CD4-positive, alpha-beta T cell (primary cell): ENCODE measurements at regions of chr7 and their contacts with region 1.

Region 1: DNA sequence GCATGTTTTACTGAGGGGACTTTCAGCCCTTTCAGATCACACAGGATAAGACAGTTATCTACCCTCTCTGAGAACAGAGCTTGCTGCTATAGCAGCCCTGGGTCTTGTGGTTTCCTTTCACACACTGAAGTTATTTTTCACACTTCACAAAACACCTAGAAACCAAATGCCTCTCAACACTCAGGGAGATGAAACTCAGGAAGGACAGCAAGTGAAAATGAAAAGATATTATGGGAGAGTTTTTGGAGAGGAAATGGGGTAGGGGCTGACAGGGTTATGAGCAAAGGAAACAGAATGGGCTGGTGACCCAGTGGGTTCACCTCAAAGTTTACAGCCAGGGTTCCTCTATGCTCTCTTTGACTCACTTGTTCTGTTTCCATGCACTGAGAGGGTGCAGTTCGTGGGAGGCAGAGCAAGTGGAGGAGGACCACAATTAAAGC is 17.0 kb upstream of the GIMAP2 start:
- DNase-seq: peak in 13 of 14 experiments; percentile 34 to 92 (median 51)
- ATAC-seq: peak; percentile 82
- H3K4me3 ChIP-seq: peak overlapping the region; percentile 4
- H3K4me3 Mint-ChIP-seq: peak overlapping the region; percentile 49
- H3K27ac ChIP-seq: peak overlapping the region; percentile 73 to 85
- H3K27ac Mint-ChIP-seq: peak overlapping the region; percentile 91
- H3K4me1 ChIP-seq: peaks cover 70% of the 10 kb centered on the region
- H3K4me1 Mint-ChIP-seq: peaks cover 94% of the 10 kb centered on the region
- H3K27me3 ChIP-seq: no peaks in the 10 kb centered on the region
- H3K27me3 Mint-ChIP-seq: no peaks in the 10 kb centered on the region
- CTCF ChIP-seq: no peak

Region 2: GRCh38 chr7:150463461-150463860 is 205.0 kb before region 1 on chr7:
- CTCF ChIA-PET with region 1: no interaction called
- POLR2A ChIA-PET with region 1: no interaction called
- intact Hi-C with region 1: no loop called
- DNase-seq: peak in 2 of 14 experiments; percentile 32 to 41
- ATAC-seq: no peak
- H3K4me3 ChIP-seq: no peak overlapping the region
- H3K4me3 Mint-ChIP-seq: peak overlapping the region; percentile 38
- H3K27ac ChIP-seq: peak overlapping the region in 1 of 2 donors; percentile 10
- H3K27ac Mint-ChIP-seq: peak overlapping the region; percentile 81
- H3K4me1 ChIP-seq: peaks cover 55% of the 10 kb centered on the region
- H3K4me1 Mint-ChIP-seq: peaks cover 93% of the 10 kb centered on the region
- H3K27me3 ChIP-seq: no peaks in the 10 kb centered on the region
- H3K27me3 Mint-ChIP-seq: no peaks in the 10 kb centered on the region
- CTCF ChIP-seq: no peak

Region 3: GRCh38 chr7:150489782-150490181 is 178.7 kb before region 1 on chr7:
- CTCF ChIA-PET with region 1: no interaction called
- POLR2A ChIA-PET with region 1: no interaction called
- intact Hi-C with region 1: no loop called
- DNase-seq: peak in 1 of 14 experiments; percentile 36
- ATAC-seq: no peak
- H3K4me3 ChIP-seq: no peak overlapping the region
- H3K4me3 Mint-ChIP-seq: no peak overlapping the region
- H3K27ac ChIP-seq: no peak overlapping the region
- H3K27ac Mint-ChIP-seq: peak overlapping the region; percentile 32
- H3K4me1 ChIP-seq: peaks cover 18% of the 10 kb centered on the region
- H3K4me1 Mint-ChIP-seq: peaks cover 71% of the 10 kb centered on the region
- H3K27me3 ChIP-seq: no peaks in the 10 kb centered on the region
- H3K27me3 Mint-ChIP-seq: no peaks in the 10 kb centered on the region
- CTCF ChIP-seq: no peak

Region 4: DNA sequence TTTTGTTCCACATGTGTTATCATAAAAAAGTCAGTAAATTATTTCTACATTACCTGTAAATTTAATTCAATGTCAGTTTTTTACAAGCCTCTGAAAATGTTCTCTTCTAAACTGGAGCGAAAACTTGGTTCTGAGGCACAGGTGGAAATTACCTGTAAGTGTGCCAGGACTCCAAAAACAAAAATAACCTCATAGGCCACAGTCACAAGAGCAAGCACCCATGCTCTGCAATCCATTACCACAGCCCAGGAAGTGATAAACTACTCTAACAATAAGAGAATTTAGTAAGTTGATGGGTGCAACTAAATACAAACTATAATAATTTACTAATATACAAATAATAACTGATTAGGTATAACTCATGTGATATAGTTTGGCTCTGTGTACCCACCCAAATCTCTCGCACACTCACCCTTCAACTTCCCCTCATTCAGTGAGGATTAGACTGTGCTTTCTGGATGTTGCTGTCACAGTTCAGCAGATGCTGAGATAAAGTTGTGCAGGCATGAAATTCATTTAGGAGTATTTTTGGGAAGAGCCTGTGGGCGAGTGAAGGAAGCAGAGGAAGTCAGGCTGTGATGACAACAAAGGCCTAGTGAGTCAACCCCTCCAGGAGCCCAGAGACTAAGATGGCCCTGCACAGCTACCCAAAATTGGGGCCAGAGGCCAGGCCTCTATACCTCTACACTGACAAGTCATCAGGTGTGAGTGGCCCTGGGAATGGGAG is 20.0 kb before region 1 on chr7:
- CTCF ChIA-PET with region 1: no interaction called
- POLR2A ChIA-PET with region 1: interaction called, 15 read pairs
- intact Hi-C with region 1: no loop called
- DNase-seq: peak in 3 of 14 experiments; percentile 68 to 77 (median 73)
- ATAC-seq: peak; percentile 79
- H3K4me3 ChIP-seq: no peak overlapping the region
- H3K4me3 Mint-ChIP-seq: peak overlapping the region; percentile 72
- H3K27ac ChIP-seq: peak overlapping the region; percentile 27 to 66
- H3K27ac Mint-ChIP-seq: peak overlapping the region; percentile 57
- H3K4me1 ChIP-seq: peaks cover 23% of the 10 kb centered on the region
- H3K4me1 Mint-ChIP-seq: peaks cover 71% of the 10 kb centered on the region
- H3K27me3 ChIP-seq: no peaks in the 10 kb centered on the region
- H3K27me3 Mint-ChIP-seq: no peaks in the 10 kb centered on the region
- CTCF ChIP-seq: no peak

Region 5: GRCh38 chr7:150657526-150657925 is 11.0 kb before region 1 on chr7:
- CTCF ChIA-PET with region 1: no interaction called
- POLR2A ChIA-PET with region 1: interaction called, 11 read pairs
- intact Hi-C with region 1: no loop called
- DNase-seq: no peak
- ATAC-seq: no peak
- H3K4me3 ChIP-seq: no peak overlapping the region
- H3K4me3 Mint-ChIP-seq: no peak overlapping the region
- H3K27ac ChIP-seq: no peak overlapping the region
- H3K27ac Mint-ChIP-seq: no peak overlapping the region
- H3K4me1 ChIP-seq: peaks cover 17% of the 10 kb centered on the region
- H3K4me1 Mint-ChIP-seq: peaks cover 40% of the 10 kb centered on the region
- H3K27me3 ChIP-seq: no peaks in the 10 kb centered on the region
- H3K27me3 Mint-ChIP-seq: no peaks in the 10 kb centered on the region
- CTCF ChIP-seq: no peak